Posterior vena cava (tissue), 2 donors: ENCODE measurements at regions of chr1 and their contacts with region 1.

Region 1: GRCh38 chr1:205002705-205003104 is 40.3 kb upstream of the CNTN2 start:
- DNase-seq: no peak

Region 2: DNA sequence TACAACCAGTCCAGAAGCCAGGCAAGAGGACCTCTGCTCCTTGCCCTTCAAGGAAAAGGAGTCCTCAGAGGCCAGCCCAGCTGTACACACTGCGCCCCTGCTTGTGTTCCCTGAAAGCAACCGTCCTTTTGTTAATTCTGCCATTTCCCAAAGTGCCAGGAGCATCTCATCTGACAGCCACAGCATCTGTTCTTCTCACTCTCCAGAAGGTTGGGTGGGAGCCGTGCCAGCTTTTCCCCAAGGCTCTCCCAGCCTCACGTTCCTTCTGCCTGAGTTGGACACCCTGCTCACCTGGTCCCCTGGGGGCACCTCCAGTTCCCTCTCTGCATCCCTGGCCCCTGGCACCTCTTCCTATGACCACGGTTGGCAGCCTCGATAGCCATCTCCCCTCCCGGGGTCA is 29.8 kb after region 1 on chr1:
- intact Hi-C with region 1: no loop called
- DNase-seq: no peak

Region 3: GRCh38 chr1:205071801-205072200 is 69.1 kb after region 1 on chr1:
- intact Hi-C with region 1: loop called in 1 of 2 experiments (anchors 1 kb)
- DNase-seq: no peak